B cell (primary cell): ENCODE measurements at regions of chr3 and their contacts with region 1.

Region 1: DNA sequence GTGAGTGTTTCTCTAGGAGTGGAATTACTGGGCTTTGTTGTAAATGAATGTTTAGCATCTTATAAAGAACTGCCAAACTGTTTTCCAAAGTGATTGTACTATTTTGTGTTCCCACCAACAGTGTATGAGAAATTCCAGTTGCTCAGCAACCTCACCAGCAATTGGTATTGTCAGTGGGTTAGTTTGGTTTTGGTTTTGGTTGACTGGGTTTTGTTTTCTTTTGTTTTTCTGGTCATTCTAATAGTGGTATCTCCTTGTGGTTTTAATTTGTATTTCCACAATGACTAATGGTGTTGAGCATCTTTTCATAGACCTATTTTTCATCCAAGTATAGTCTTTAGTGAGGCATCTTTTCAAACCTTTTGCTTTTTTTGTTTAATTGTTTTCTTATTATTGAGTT is 27.1 kb downstream of the FILIP1L start:
- DNase-seq: no peak
- ATAC-seq: no peak
- H3K4me3 ChIP-seq: no peak overlapping the region
- H3K4me3 Mint-ChIP-seq: no peak overlapping the region
- H3K27ac ChIP-seq: no peak overlapping the region
- H3K27ac Mint-ChIP-seq: no peak overlapping the region
- H3K4me1 ChIP-seq: peaks cover 3 to 8% of the 10 kb centered on the region in 2 donors
- H3K4me1 Mint-ChIP-seq: peaks cover 20% of the 10 kb centered on the region
- H3K27me3 ChIP-seq: no peaks in the 10 kb centered on the region
- H3K27me3 Mint-ChIP-seq: no peaks in the 10 kb centered on the region
- CTCF ChIP-seq: no peak

Region 2: GRCh38 chr3:100057716-100058575 is 29.3 kb before region 1 on chr3:
- CTCF ChIA-PET with region 1: no interaction called
- POLR2A ChIA-PET with region 1: no interaction called
- intact Hi-C with region 1: no loop called
- DNase-seq: no peak
- ATAC-seq: no peak
- H3K4me3 ChIP-seq: no peak overlapping the region
- H3K4me3 Mint-ChIP-seq: no peak overlapping the region
- H3K27ac ChIP-seq: no peak overlapping the region
- H3K27ac Mint-ChIP-seq: no peak overlapping the region
- H3K4me1 ChIP-seq: peaks cover 0 to 9% of the 10 kb centered on the region in 2 donors
- H3K4me1 Mint-ChIP-seq: peaks cover 4% of the 10 kb centered on the region
- H3K27me3 ChIP-seq: no peaks in the 10 kb centered on the region
- H3K27me3 Mint-ChIP-seq: no peaks in the 10 kb centered on the region
- CTCF ChIP-seq: no peak

Region 3: DNA sequence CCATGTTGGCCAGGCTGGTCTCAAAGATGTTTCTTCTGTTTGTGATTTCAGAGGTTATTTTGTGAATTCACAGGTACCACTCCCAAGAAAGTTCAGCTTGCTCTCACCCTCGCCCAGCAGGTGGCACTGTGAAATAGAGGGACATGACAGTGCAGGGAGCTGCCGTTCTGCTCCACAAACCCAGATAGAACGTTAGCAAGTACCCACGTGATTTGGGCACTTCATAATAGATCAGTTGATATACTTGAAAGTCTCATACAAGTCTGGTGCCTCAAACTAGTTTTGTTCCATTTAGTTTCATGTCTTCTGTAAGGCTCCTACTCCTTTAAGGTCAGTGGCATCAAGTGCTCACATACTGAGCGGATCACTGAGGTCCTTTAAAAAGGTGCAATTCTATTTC is 18.4 kb before region 1 on chr3:
- CTCF ChIA-PET with region 1: interaction called, 13 read pairs
- POLR2A ChIA-PET with region 1: no interaction called
- intact Hi-C with region 1: loop called (anchors 2 kb)
- DNase-seq: peak; percentile 84
- ATAC-seq: peak; percentile 95
- H3K4me3 ChIP-seq: no peak overlapping the region
- H3K4me3 Mint-ChIP-seq: peak overlapping the region; percentile 53
- H3K27ac ChIP-seq: no peak overlapping the region
- H3K27ac Mint-ChIP-seq: peak overlapping the region; percentile 57
- H3K4me1 ChIP-seq: peaks cover 37% of the 10 kb centered on the region in 2 donors
- H3K4me1 Mint-ChIP-seq: peaks cover 42% of the 10 kb centered on the region
- H3K27me3 ChIP-seq: no peaks in the 10 kb centered on the region
- H3K27me3 Mint-ChIP-seq: no peaks in the 10 kb centered on the region
- CTCF ChIP-seq: peak; percentile 86

Region 4: GRCh38 chr3:100125161-100125938 is 38.2 kb after region 1 on chr3:
- CTCF ChIA-PET with region 1: no interaction called
- POLR2A ChIA-PET with region 1: no interaction called
- intact Hi-C with region 1: no loop called
- DNase-seq: no peak
- ATAC-seq: no peak
- H3K4me3 ChIP-seq: no peak overlapping the region
- H3K4me3 Mint-ChIP-seq: no peak overlapping the region
- H3K27ac ChIP-seq: no peak overlapping the region
- H3K27ac Mint-ChIP-seq: no peak overlapping the region
- H3K4me1 ChIP-seq: no peaks in the 10 kb centered on the region
- H3K4me1 Mint-ChIP-seq: no peaks in the 10 kb centered on the region
- H3K27me3 ChIP-seq: no peaks in the 10 kb centered on the region
- H3K27me3 Mint-ChIP-seq: no peaks in the 10 kb centered on the region
- CTCF ChIP-seq: no peak